ENCODE measurements at regions of chr3 and their contacts with region 1.

Region 1: DNA sequence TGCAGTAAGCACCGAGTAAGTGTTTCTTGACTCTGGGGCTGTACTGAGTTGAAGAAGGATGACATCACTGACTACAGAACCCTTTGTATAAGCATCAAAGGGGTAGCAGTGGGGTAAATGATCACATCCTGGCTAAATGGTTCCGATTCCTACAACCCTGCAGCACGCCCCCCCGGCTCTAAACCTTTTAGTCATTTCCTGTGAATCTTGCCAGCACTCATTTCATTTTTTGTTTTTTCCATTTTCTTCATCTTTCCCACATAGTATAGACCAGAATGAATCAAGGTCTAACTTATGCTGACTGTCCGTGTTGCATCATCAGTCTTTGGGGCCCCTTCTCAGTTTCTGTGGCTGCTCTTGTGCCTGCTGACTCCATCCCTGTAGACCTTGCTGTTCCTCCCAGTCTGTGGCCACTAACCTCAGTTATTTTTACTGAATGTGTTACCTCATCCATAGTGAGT is 383.1 kb upstream of the TPRG1 start:
- DNase-seq: peak; percentile 89
- ATAC-seq: peak; percentile 97
- H3K4me3 Mint-ChIP-seq: no peak overlapping the region
- H3K27ac Mint-ChIP-seq: no peak overlapping the region
- H3K4me1 Mint-ChIP-seq: peaks cover 2% of the 10 kb centered on the region
- H3K27me3 Mint-ChIP-seq: no peaks in the 10 kb centered on the region

Region 2: DNA sequence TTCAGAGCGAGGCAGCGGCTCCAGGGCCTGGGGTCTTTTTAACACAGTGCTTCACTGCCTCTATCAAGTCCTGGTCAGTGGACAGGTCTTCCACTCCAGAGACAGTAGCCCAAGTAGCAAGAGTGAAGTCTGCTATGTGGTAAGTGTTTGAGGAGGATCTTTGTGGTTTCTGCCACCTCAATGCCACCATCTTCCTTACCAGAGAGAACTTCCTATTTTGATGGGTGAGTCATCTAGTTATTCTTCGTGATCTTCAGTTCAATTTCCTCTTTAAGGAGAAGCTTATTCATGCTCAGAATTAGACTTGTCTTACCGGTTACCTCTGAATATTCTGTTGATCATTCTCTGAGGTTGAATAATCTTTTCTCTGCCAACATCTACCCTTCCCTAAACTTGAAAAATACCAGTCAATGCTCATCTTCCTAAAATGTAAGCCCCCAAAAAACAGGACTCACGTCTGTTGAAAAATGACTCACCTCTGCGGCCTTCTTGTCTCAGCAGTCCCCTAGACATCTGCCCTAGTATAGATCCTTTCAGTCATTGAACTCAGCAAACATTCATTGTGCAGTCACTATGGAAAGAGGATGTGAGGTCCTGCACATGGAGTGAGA is 1011.2 kb before region 1 on chr3:
- CTCF ChIA-PET with region 1: no interaction called
- POLR2A ChIA-PET with region 1: no interaction called
- intact Hi-C with region 1: loop called in 1 of 2 experiments (anchors 1 kb)
- DNase-seq: peak; percentile 69
- ATAC-seq: peak; percentile 88
- H3K4me3 Mint-ChIP-seq: peak overlapping the region; percentile 27
- H3K27ac Mint-ChIP-seq: peak overlapping the region; percentile 92
- H3K4me1 Mint-ChIP-seq: peaks cover 38% of the 10 kb centered on the region
- H3K27me3 Mint-ChIP-seq: peaks cover 11% of the 10 kb centered on the region

Region 3: GRCh38 chr3:188170461-188171459 is 617.9 kb before region 1 on chr3:
- CTCF ChIA-PET with region 1: no interaction called
- POLR2A ChIA-PET with region 1: no interaction called
- intact Hi-C with region 1: loop called in 1 of 2 experiments (anchors 1 kb)
- DNase-seq: peak; percentile 82
- ATAC-seq: peak; percentile 91
- H3K4me3 Mint-ChIP-seq: peak overlapping the region; percentile 20
- H3K27ac Mint-ChIP-seq: peak overlapping the region; percentile 88
- H3K4me1 Mint-ChIP-seq: peaks cover 59% of the 10 kb centered on the region
- H3K27me3 Mint-ChIP-seq: no peaks in the 10 kb centered on the region

Region 4: DNA sequence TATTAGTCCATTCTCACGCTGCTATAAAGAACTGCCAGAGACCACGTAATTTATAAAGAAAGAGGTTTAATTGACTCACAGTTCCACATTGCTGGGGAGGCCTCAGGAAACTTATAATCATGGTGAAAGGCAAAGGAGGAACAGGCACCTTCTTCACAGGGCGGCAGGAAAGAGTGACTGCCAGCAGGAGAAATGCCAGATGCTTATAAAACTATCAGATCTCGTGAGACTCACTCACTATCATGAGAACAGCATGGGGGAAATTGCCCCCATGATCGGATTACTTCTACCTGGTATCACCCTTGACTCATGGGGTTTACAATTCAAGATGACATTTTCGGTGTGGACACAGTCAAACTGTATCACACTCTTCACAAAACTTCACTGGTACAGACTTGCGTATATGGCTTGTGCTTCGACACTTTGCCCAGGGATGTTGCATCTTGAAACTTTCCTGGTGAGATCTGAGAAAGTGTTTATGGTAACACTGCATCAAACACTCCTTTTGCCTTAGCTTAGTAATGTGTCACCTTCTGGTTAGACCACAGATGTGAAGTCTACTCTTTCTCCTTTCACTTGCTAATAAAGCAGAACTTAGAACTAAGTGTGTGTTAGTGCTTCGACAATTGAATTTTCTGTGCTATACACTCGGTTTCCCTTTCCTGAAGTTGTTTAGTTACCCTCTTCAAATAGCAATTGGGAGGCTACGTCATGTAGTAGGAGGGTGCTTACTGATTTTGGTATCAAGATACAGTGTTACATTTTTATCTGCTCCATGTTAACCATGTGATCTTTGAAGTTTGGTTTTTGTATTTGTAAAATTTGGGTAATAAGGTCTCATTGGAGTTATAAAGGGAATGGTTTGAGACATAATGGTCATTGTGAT is 449.0 kb before region 1 on chr3:
- CTCF ChIA-PET with region 1: no interaction called
- POLR2A ChIA-PET with region 1: no interaction called
- intact Hi-C with region 1: loop called (anchors 1 kb)
- DNase-seq: peak; percentile 76
- ATAC-seq: peak; percentile 89
- H3K4me3 Mint-ChIP-seq: peak overlapping the region; percentile 54
- H3K27ac Mint-ChIP-seq: peak overlapping the region; percentile 95
- H3K4me1 Mint-ChIP-seq: peaks cover 43% of the 10 kb centered on the region
- H3K27me3 Mint-ChIP-seq: no peaks in the 10 kb centered on the region

Region 5: GRCh38 chr3:188697127-188697526 is 91.5 kb before region 1 on chr3:
- CTCF ChIA-PET with region 1: interaction called, 3 read pairs
- POLR2A ChIA-PET with region 1: no interaction called
- intact Hi-C with region 1: loop called (anchors 1 kb)
- DNase-seq: peak; percentile 54
- ATAC-seq: peak; percentile 42
- H3K4me3 Mint-ChIP-seq: no peak overlapping the region
- H3K27ac Mint-ChIP-seq: no peak overlapping the region
- H3K4me1 Mint-ChIP-seq: peaks cover 47% of the 10 kb centered on the region
- H3K27me3 Mint-ChIP-seq: peaks cover 2% of the 10 kb centered on the region

Region 6: DNA sequence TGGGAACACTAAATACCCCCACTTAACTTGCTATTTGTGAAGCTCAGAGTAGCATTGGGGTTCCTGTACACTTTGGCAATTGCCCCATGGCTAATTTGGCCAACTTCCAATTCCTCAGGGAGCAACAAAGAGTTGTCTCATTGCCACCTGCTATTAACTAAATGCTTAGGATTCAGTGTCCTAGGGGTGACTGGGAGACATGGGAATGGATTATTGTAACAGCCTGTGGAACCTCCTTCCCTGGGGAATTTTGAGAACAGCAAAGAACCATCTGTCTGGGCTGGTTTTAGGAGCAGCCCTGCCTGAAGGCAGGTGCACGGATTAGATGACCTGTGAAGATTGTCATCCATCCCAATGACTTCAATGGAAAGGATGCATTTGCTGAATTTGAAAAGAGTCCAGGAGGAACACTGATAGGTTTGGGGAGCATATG is 54.2 kb before region 1 on chr3:
- CTCF ChIA-PET with region 1: no interaction called
- POLR2A ChIA-PET with region 1: no interaction called
- intact Hi-C with region 1: no loop called
- DNase-seq: no peak
- ATAC-seq: no peak
- H3K4me3 Mint-ChIP-seq: no peak overlapping the region
- H3K27ac Mint-ChIP-seq: no peak overlapping the region
- H3K4me1 Mint-ChIP-seq: peaks cover 4% of the 10 kb centered on the region
- H3K27me3 Mint-ChIP-seq: no peaks in the 10 kb centered on the region

Region 7: GRCh38 chr3:188947401-188948280 is 159.0 kb after region 1 on chr3:
- CTCF ChIA-PET with region 1: no interaction called
- POLR2A ChIA-PET with region 1: interaction called, 3 read pairs
- intact Hi-C with region 1: loop called (anchors 1 to 2 kb)
- DNase-seq: peak; percentile 63
- ATAC-seq: peak; percentile 28
- H3K4me3 Mint-ChIP-seq: peak overlapping the region; percentile 16
- H3K27ac Mint-ChIP-seq: no peak overlapping the region
- H3K4me1 Mint-ChIP-seq: peaks cover 39% of the 10 kb centered on the region
- H3K27me3 Mint-ChIP-seq: peaks cover 13% of the 10 kb centered on the region